Right ventricle myocardium inferior (tissue), 1 donor: ENCODE measurements at regions of chr2 and their contacts with region 1.

Region 1: DNA sequence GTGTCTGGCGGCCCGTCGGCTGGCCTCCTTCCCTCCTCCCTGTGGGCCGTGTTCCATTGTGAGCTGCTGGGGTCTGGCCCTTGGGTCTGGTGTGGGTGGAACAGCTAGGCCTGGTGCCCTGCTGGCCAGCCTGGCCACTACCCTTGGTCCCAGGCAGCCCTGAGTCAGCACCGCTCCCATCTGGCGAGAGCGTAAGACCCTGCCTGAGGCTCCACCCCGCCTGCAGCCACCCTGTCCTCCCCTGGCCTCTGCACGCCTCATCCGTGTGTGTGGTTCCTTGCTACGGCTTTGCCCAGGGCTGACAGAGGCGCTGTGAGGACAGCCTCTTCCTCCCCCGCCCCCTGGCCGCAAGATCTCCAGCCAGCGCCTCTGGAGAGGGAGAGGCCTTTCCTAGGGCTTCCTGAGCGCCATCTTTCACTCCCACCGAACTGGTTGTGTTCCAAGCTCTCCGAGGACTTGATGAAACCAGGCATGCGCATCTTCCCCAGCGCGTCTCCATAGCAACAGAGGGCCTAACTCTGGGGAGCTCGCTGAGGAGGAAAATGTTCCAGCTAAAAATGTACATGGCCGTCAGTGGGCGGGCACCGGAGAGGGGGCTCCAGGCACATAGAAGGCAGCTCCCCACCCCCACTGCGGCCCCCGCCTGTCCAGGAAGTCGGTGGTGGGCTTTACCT is 83.0 kb downstream of the STPG4 start:
- DNase-seq: peak; percentile 94
- ATAC-seq: peak; percentile 79

Region 2: DNA sequence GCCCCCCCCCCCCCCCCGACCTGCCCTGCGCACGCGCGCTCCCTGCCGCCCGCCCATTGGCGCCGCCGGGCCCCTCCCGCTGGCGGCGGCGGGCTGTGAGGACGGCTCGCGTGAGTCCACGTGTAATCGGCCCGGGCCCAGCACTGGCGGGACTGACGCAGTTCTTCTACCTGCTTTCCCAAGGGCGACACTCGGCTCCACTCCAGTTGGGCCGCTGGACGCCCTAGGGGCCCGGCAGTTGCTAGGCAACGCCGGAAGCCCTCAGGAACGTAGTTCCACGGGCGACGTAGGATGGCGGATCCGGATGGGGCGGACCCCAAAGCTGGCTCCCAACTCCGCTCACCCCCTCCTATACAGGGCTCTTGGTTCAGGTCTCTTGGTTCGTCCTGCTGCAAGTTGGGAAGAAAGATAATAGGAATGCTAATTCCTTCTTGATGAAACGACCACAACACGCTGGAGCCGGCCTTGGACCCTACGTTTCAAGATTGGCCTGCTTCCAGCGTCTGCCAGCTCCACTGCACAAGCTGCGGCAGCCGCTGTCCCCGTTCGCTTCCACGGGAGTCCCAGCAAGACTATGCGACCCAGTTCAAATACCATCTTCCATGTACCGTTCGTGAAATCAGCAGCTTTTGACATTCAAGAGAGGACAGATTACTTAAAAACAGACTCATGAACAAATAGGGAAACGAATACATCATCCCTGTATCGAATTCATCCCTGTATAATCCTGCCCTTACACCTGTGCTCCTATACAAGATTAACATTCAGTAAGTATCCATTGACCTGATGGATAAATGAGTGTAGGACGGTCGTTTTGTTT is 156.1 kb before region 1 on chr2:
- intact Hi-C with region 1: loop called (anchors 10 kb)
- DNase-seq: peak; percentile 95
- ATAC-seq: peak; percentile 94

Region 3: DNA sequence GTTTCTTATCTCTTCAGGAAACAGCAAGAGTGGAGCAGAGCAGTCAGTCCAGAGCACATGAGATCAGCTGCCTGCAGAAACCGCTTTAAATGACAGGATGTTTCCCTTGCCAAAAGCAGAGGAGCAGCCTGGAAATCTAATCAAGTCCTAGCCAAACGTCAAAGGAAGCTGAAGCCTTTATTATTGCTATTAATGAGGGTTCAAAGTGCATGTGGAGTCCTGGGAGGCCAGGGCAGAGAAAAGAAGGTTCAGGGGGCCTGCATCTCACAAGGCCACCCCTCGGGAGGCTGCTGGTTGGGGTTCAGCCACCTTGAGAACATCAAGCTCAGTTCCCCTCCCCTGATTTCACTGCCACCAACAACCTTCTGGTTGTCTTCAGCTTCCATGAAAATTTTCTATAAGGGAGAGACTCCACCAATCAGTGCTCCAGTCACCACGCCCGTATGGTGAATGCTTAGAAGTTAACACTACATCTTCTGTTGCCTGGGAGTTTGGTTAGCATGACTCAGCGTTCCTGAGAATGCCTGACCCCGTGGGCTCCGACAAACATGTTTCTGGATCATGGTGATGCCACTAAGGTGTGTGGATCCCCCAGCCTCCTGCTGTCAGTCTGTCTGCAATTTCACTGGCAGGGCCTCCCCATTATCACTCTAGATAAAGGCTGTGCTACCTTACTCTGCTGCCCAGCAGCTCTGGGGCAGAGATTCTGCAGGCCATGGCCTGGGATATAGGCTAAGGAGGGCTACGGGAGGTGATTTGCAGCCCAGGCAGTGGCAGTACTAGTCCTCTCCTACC is 16.7 kb after region 1 on chr2:
- intact Hi-C with region 1: loop called (anchors 2 kb)
- DNase-seq: no peak
- ATAC-seq: peak; percentile 62